ENCODE measurements at regions of chr5 and their contacts with region 1.

Region 1: DNA sequence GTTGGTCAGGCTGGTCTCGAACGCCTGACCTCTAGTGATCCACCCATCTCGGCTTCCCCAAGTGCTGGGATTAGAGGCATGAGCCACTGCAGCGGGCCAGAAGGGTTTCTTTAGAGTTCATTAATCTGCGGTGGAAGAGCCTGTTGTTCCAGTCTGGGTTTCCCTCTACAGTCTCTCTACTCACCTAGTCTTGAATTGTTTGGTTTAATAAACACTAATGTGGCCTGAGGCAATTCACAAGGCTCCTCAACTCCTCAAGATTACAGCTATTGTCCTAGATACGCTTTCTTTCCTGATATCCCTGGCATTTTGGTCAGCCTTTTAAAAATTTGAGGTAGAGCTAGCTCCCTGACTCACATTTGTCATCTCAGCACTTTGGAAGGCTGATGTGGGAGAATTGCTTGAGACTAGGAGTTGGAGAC is 4.5 kb upstream of the SAR1B start:
- DNase-seq: no peak
- H3K4me3 ChIP-seq: no peak overlapping the region
- H3K27ac ChIP-seq: no peak overlapping the region
- H3K4me1 ChIP-seq: peaks cover 0 to 8% (median 6%) of the 10 kb centered on the region in 4 donors
- H3K27me3 ChIP-seq: no peaks in the 10 kb centered on the region
- CTCF ChIP-seq: no peak
- EP300 ChIP-seq: no peak
- POLR2A ChIP-seq: no peak

Region 2: DNA sequence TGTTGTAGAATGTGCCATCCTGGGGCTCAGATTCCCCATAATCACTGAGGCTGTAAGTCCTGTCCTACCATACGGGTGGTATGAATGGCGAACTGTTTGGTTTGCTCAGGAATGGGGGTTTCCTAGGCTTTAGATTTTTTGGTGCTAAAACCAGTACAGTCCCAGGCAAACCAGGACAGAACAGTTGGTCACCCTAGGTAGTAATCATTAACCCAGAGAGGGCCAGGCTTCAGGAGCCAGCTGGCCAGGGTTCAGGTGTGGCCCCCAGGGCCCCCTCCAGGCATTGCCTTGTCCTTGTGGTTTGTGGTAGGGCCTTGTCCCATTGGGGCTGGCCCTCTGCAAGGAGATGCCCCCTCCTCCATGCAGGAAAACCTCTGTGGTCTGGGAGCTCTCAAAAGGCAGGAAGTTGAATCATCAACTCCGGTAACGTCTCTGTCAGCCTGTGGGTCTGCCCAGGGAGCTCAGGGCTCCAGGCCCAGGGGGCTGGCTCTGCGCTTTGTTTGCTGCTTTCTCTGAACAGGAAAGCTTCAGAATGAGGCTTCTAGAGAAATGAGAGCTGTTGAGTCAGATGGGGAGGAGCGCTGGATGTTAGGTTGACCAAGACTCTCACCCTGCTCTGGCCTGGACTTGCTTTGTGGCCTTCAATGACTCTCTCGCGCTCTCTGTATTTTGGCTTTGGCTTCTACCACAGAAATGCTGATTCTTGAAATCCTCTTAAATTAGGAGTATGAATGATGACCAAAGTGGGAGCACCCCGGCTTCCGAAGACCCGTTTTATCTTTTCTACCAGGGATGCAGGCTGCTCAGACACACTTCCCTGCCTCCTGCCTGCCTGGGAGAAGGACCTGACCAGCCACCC is 133.9 kb before region 1 on chr5:
- intact Hi-C with region 1: no loop called
- DNase-seq: no peak
- H3K4me3 ChIP-seq: no peak overlapping the region
- H3K27ac ChIP-seq: peak overlapping the region; percentile 55 to 74 (median 71)
- H3K4me1 ChIP-seq: peaks cover 28 to 43% (median 37%) of the 10 kb centered on the region in 4 donors
- H3K27me3 ChIP-seq: no peaks in the 10 kb centered on the region
- CTCF ChIP-seq: no peak
- EP300 ChIP-seq: no peak
- POLR2A ChIP-seq: no peak

Region 3: GRCh38 chr5:134648425-134649162 is 11.4 kb after region 1 on chr5 and contains the start of gene SEC24A:
- intact Hi-C with region 1: loop called (anchors 2 kb)
- DNase-seq: peak; percentile 94
- H3K4me3 ChIP-seq: peak within 1 kb of the TSS; percentile 78 to 94 (median 83)
- H3K27ac ChIP-seq: peak within 1 kb of the TSS; percentile 87 to 97 (median 94)
- H3K4me1 ChIP-seq: peaks cover 26 to 53% (median 36%) of the 10 kb centered on the region in 4 donors
- H3K27me3 ChIP-seq: no peaks in the 10 kb centered on the region
- CTCF ChIP-seq: no peak
- EP300 ChIP-seq: no peak
- POLR2A ChIP-seq: peak; percentile 59
- total RNA-seq, gene SEC24A: 12.8 to 17.9 (median 14.7) TPM

Measured in esophagus muscularis mucosa (tissue), 4 donors.